Adrenal gland (tissue), 19 donors: ENCODE measurements at regions of chr3 and their contacts with region 1.

Region 1: DNA sequence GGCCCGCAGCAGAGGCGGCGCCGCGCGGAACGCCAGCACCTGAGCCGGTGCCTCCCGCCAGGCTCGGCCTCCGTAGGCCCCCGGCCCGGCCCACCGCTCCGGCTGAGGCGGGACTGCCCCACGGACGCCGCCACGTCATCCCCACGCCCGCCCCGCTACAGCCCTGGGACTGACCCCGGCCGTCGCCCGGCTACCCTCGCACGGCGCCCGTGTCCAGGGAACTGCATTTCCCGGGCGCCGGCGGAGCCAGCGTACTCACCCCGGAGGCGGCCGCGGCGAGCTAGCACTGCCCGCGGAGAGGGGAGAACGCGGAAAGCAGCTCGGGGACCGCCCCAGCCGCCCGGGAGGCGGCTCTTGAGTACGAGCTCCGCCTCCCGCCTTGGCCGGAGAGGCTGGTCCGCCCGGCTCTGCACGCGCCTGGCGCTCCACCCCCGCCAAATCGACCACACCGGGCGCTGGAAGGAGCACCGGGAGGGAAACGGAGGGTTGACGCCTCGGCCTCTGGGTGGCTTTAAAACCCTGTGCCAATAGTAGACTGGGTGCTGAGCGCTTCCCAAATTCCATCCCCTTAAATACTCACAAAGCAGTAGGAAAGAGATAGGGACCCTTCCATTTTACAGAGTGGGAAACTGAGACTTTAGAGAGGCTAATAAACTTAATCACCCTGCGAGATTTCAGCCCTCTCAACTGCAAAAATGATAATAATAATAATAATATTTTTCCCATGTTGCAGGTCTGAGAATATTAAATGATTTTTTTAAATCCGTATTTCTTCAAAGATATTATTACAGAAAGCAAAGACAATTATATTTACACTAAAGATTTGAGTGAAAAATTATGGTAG is at the start of gene B4GALT4:
- DNase-seq: peak; percentile 81 to 89 (median 87)
- H3K4me3 ChIP-seq: peak within 1 kb of the TSS; percentile 39 to 78 (median 61)
- H3K27ac ChIP-seq: peak within 1 kb of the TSS; percentile 46 to 92 (median 84)
- H3K4me1 ChIP-seq: peaks cover 2 to 36% of the 10 kb centered on the region in 2 donors
- H3K27me3 ChIP-seq: no peaks in the 10 kb centered on the region
- CTCF ChIP-seq: no peak
- POLR2A ChIP-seq: peak; percentile 88 to 94
- total RNA-seq, gene B4GALT4: 10.3 to 19.2 (median 15.8) TPM

Region 2: DNA sequence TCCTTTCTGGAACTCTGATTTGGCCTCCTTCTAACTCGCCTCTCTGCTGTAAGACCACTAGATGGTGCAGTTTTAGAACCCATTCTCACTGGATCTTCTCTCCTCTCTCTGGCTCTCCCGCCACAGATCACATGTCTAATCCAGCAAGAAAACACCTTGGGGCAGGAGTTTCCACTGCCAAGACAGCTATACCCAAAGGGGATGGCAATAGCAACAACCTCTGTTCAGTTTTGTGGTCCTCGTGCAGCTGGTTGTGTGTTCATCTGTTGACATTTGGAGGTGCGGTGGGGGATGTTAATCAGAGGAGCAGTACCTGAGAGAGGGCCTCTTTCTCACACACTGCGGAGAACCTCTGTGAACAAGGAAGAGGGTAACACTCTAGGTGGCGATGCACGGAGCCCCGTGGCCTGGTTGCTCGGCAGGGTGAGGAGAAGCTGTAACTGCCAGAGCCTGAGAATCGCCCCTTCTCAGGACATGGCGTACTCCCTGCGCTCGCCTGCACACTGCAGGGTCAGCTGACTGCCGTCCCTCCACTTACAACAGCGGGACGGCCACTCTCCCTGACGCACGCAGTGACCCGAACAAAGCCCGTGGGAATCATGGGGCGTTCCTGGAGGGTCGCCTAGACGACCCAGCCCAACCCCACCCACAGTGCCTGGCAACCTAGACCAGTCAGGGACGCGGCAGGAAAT is 95.2 kb before region 1 on chr3 and contains the start of gene TEX55:
- intact Hi-C with region 1: loop called in 1 of 2 experiments (anchors 10 kb)
- DNase-seq: peak in 2 of 7 donors; percentile 10 to 20
- H3K4me3 ChIP-seq: no peak within 1 kb of the TSS
- H3K27ac ChIP-seq: no peak within 1 kb of the TSS
- H3K4me1 ChIP-seq: no peaks in the 10 kb centered on the region
- H3K27me3 ChIP-seq: no peaks in the 10 kb centered on the region
- CTCF ChIP-seq: peak; percentile 21 to 58 (median 48)
- POLR2A ChIP-seq: no peak
- total RNA-seq, gene TEX55: not detected